Activated CD4-positive, alpha-beta T cell treated with anti-CD3 and anti-CD28 coated beads for 36 hours (primary cell): ENCODE measurements at regions of chrX and their contacts with region 1.

Region 1: DNA sequence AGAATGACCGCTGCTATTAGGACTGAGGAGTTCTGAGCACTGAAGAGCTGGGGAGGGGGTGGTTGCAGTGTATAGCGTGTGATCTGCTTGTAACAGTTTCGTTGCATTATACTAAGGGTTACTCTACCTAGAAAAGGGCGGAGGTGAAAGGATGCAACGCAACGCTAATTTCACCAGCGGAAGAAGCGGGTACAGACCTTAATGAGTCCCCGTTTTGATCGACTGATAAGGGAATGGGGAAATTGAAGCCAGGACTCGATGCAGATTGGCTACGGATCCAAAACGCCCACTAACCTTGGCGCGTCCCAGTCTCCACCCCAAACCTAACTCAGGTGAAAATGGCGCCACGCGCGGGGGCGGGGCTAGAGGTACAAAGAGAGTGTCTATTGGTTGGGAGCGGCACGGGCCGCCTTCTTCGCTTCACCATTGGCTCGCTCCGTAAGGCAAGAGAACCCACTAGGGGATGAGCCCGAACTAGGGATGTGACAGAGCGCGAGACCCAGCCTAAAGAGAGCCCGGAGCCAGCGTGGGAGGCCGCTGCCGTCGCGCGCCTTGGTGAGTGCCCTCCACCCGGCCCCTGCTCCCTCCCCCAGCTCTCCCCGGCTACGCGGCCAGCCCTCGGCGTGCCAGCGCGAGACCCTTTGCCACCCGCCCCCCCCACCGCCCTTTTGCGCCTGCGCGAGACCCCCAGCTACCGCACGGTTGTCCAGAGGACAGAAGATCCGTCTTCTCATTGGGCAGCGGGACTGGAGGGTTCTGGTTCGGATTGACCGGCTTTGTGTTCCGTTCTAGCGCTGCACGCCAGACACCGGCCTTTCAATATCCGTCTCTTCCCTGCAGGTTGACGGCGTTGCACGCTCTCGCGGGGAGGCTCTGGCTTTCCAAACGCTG is at the start of gene EBP:
- DNase-seq: peak; percentile 97
- ATAC-seq: peak; percentile 94
- H3K4me3 Mint-ChIP-seq: peak within 1 kb of the TSS; percentile 89
- H3K27ac Mint-ChIP-seq: peak within 1 kb of the TSS; percentile 98
- H3K4me1 Mint-ChIP-seq: peaks cover 15% of the 10 kb centered on the region
- H3K27me3 Mint-ChIP-seq: no peaks in the 10 kb centered on the region
- total RNA-seq, gene EBP: 137 to 140 TPM

Region 2: DNA sequence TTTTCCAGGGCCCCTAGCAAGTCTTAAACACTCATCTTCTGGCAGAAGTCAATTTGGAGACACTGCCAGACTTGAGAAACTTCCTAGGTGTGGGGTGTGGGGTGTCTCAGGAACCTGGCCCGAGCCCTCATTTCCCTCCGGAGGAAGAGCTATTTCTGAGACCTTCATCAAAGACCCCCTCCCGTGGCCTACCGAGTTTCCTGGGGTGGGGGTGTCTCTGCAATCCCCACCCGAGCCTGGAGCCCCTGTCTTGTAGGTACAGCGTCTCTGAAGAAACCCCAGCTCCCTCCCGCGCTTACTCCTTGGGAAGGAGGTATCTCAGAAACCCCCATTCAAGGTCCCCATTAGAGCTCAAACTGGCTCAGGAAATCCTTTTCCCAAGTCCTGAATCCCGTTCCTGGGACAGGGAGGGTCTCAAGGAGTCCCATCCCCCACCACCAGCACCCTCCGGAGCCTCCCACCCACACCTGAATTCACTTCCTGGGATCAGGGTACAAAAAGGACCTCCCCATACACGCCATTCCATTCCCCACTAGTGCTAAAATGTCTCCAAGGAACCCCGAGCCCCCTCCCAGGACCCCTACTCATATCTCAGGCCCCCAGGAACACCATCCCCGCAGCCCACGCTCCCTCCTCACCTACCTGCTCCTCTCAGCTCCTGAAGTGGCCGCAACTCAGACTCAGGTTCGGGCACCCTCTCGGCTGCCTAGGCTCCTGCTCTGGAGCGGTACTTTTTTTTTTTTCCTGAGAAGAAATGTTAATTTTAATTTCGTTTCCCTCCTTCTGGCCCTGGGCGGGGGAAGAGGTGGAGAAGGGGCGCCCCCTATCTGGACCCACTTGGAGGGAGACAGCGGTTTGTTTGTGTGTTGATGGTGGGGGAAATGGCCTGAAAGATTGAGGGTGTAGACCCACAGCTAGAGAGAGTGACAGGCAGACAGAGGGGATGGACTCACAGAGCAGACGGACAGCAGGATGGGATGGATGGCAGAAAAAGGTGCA is 52.6 kb before region 1 on chrX:
- CTCF ChIA-PET with region 1: no interaction called
- POLR2A ChIA-PET with region 1: no interaction called
- intact Hi-C with region 1: loop called in 1 of 2 experiments (anchors 2 kb)
- DNase-seq: peak; percentile 61
- ATAC-seq: peak; percentile 47
- H3K4me3 Mint-ChIP-seq: peak overlapping the region; percentile 89
- H3K27ac Mint-ChIP-seq: peak overlapping the region; percentile 95
- H3K4me1 Mint-ChIP-seq: peaks cover 35% of the 10 kb centered on the region
- H3K27me3 Mint-ChIP-seq: no peaks in the 10 kb centered on the region

Region 3: DNA sequence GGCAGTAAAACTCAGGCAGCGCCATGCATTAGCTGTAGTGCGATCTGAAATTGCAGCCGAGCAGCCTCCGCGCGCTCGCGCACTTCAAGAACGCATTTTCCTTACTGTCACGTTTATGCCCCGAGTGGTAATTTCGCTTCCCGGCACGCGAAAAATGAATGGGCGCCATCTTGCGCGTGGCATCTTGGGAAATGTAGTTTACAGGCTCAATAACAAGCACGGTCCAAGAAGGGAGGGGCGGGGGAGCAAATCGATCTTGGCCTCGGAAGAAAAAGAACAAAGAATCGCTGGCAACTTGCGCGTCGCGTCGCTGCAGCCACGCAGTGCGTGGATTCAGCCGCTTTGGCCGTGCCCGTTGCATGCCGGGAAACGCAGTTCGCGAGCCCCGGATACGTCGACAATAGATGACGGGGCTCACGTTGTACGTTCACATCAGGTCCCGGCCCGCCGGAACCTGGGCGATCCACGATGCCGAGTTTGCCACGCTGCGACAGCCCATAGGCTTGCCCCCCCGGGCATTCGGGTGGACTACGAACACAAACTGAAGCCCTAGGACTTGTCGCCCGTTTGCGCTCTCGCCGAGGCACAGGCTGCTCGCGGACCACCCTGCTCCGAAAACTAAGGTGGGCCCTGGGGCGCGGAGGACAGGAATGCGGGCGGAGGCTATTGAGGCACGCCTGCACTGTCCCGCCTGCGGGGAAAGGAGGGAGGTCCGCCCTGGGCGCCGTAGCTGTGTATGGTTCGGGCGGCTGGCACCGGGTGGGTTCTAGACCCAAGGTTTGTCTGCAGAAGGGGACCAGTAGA is 45.6 kb before region 1 on chrX and contains the start of gene FTSJ1:
- CTCF ChIA-PET with region 1: no interaction called
- POLR2A ChIA-PET with region 1: interaction called, 4 read pairs
- intact Hi-C with region 1: loop called (anchors 1 to 5 kb)
- DNase-seq: peak; percentile 88
- ATAC-seq: peak; percentile 91
- H3K4me3 Mint-ChIP-seq: peak within 1 kb of the TSS; percentile 93
- H3K27ac Mint-ChIP-seq: peak within 1 kb of the TSS; percentile 90
- H3K4me1 Mint-ChIP-seq: peaks cover 36% of the 10 kb centered on the region
- H3K27me3 Mint-ChIP-seq: no peaks in the 10 kb centered on the region
- total RNA-seq, gene FTSJ1: 73.0 to 93.7 TPM

Region 4: DNA sequence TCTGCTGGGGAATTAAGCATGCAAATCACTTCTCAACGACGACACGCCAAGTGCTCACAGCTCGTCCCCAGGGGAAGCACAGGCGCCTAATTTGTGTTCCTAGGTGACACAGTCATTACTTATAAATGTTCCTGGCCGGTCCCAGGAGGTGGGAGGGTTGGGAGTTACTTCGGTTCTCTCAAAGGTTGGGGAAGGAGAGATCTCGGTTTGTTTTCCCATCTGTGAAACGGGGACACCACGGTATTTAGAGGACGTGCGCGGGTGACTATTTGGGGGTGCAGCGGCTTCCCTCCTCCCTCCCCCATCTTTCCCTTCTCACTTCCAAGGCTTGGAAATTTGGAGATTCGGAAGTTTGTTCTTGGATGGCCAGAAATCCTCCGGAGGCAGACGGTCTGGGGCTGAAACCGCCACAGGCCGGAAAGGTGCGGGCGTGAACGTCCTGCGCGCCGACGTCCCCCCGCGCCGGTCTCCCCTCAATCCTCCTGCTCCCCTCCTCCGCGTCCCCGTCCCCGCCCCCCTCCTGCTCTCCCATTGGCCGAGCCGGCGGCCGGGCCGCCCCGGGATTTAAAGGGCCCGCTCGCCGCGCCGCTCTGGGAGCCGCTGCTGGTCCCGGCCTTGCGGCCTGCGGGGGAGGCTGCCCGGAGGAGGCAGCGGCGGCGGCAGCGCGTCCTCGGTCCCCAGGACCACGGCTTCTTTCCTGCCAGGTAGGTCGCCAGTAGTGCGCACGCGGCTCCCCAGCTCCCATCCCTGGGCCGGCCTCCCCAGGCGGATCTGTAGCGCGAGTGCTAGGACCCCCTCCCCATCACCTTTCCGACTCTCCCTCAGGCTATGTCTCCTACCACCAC is 13.0 kb before region 1 on chrX and contains the start of gene PORCN:
- CTCF ChIA-PET with region 1: interaction called, 3 read pairs
- POLR2A ChIA-PET with region 1: no interaction called
- intact Hi-C with region 1: loop called (anchors 1 kb)
- DNase-seq: peak; percentile 87
- ATAC-seq: peak; percentile 92
- H3K4me3 Mint-ChIP-seq: peak within 1 kb of the TSS; percentile 85
- H3K27ac Mint-ChIP-seq: peak within 1 kb of the TSS; percentile 83
- H3K4me1 Mint-ChIP-seq: peaks cover 13% of the 10 kb centered on the region
- H3K27me3 Mint-ChIP-seq: no peaks in the 10 kb centered on the region
- total RNA-seq, gene PORCN: 6.9 to 9.0 TPM

Region 5: DNA sequence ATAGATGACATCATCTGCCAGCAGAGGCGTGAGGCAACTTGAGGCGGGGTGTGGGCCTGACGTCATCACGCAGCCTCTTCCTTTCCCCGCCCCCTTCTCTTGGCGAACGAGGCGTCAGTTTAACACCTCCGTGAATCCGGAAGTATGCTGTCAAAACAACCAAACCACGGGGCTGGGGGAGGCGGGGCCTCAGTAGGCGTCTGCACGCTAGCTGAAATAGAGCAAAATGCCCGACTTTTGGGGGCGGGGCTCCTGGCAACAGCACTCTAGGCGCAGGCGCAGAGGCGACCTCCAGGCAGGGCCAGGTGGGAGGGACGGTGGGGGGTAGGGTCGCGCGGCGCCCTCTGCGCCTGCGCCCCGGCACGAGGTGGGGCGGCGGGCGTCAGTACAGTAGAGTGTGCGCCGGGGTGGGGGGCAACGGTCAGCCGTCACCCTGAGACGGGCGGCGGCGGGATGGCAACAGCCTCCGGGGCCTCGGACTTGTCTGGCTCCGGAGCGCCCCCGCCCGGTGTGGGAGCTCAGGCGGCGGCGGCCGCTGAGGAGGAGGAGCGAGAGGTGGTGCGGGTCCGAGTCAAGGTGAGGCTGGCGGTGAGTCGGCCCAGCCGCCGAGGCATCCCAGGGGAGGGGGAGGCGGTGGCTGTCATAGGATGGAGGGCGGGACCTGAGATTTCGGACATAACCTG is 17.9 kb after region 1 on chrX and contains the start of gene TBC1D25:
- CTCF ChIA-PET with region 1: no interaction called
- POLR2A ChIA-PET with region 1: interaction called, 5 read pairs
- intact Hi-C with region 1: loop called (anchors 1 kb)
- DNase-seq: peak; percentile 98
- ATAC-seq: peak; percentile 80
- H3K4me3 Mint-ChIP-seq: peak within 1 kb of the TSS; percentile 87
- H3K27ac Mint-ChIP-seq: peak within 1 kb of the TSS; percentile 89
- H3K4me1 Mint-ChIP-seq: peaks cover 15% of the 10 kb centered on the region
- H3K27me3 Mint-ChIP-seq: no peaks in the 10 kb centered on the region
- total RNA-seq, gene TBC1D25: 13.2 to 15.2 TPM

Region 6: GRCh38 chrX:48597353-48598264 is 76.0 kb after region 1 on chrX and contains the start of gene WDR13:
- CTCF ChIA-PET with region 1: interaction called, 3 read pairs
- POLR2A ChIA-PET with region 1: no interaction called
- intact Hi-C with region 1: loop called in 1 of 2 experiments (anchors 5 kb)
- DNase-seq: peak; percentile 94
- ATAC-seq: peak; percentile 91
- H3K4me3 Mint-ChIP-seq: peak within 1 kb of the TSS; percentile 99
- H3K27ac Mint-ChIP-seq: peak within 1 kb of the TSS; percentile 98
- H3K4me1 Mint-ChIP-seq: peaks cover 8% of the 10 kb centered on the region
- H3K27me3 Mint-ChIP-seq: no peaks in the 10 kb centered on the region
- total RNA-seq, gene WDR13: 27.2 to 39.4 TPM